Activated CD4-positive, alpha-beta T cell treated with anti-CD3 and anti-CD28 coated beads for 36 hours (primary cell): ENCODE measurements at regions of chr19 and their contacts with region 1.

Region 1: DNA sequence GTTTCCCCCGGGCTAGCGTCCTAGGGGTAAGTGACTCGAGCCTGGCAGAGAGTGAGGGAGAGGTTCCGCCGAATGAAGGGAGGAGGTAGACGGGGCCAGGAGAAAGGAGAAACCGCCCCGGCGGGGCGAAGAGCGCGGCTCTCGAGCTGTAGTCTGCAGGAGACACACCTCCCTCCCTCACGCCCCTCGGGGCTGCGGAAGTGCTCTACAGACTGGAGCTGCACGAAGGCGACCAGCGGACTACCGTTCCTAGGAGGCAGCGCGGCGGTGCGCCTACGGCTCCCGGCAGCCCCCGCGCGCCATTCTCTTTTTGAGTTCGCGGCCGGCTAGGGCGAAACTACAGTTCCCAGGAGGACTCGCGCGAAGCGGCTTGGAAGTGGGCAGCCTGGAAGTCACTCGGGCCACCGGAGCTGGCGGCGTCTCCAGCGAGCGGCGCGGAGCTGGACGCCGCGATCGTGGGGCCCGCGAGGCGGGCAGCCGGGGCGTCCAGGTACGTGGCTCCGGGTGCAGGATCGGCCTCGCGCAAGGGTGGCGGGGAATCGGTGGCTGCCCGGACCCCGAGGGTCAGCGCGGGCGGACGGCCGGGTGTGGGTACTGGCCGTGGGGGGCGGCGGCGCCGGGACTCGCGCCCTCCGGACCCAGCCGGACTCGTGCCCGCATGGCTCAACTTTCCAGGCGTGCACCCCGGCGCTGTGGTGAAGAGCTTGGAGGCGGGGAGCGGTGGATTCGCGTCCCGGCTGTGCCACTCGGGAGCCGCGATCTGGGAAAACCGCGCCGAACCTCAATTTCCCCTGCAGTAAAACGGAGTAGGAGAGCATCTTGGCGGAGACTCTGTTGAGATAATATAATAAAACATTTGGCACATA is at the start of gene SIPA1L3:
- DNase-seq: peak; percentile 97
- ATAC-seq: peak; percentile 98
- H3K4me3 Mint-ChIP-seq: peak within 1 kb of the TSS; percentile 73
- H3K27ac Mint-ChIP-seq: peak within 1 kb of the TSS; percentile 74
- H3K4me1 Mint-ChIP-seq: peaks cover 20% of the 10 kb centered on the region
- H3K27me3 Mint-ChIP-seq: no peaks in the 10 kb centered on the region
- total RNA-seq, gene SIPA1L3: 10.5 to 18.3 TPM

Region 2: GRCh38 chr19:37763488-37763887 is 143.6 kb before region 1 on chr19:
- CTCF ChIA-PET with region 1: no interaction called
- POLR2A ChIA-PET with region 1: no interaction called
- intact Hi-C with region 1: no loop called
- DNase-seq: peak; percentile 38
- ATAC-seq: peak; percentile 91
- H3K4me3 Mint-ChIP-seq: no peak overlapping the region
- H3K27ac Mint-ChIP-seq: no peak overlapping the region
- H3K4me1 Mint-ChIP-seq: peaks cover 4% of the 10 kb centered on the region
- H3K27me3 Mint-ChIP-seq: no peaks in the 10 kb centered on the region

Region 3: GRCh38 chr19:37896180-37896579 is 10.9 kb before region 1 on chr19:
- CTCF ChIA-PET with region 1: interaction called, 15 read pairs
- POLR2A ChIA-PET with region 1: no interaction called
- intact Hi-C with region 1: no loop called
- DNase-seq: no peak
- ATAC-seq: no peak
- H3K4me3 Mint-ChIP-seq: no peak overlapping the region
- H3K27ac Mint-ChIP-seq: no peak overlapping the region
- H3K4me1 Mint-ChIP-seq: peaks cover 3% of the 10 kb centered on the region
- H3K27me3 Mint-ChIP-seq: peaks cover 8% of the 10 kb centered on the region

Region 4: GRCh38 chr19:37951816-37952210 is 44.7 kb after region 1 on chr19:
- CTCF ChIA-PET with region 1: no interaction called
- POLR2A ChIA-PET with region 1: no interaction called
- intact Hi-C with region 1: no loop called
- DNase-seq: no peak
- ATAC-seq: no peak
- H3K4me3 Mint-ChIP-seq: no peak overlapping the region
- H3K27ac Mint-ChIP-seq: no peak overlapping the region
- H3K4me1 Mint-ChIP-seq: no peaks in the 10 kb centered on the region
- H3K27me3 Mint-ChIP-seq: no peaks in the 10 kb centered on the region

Region 5: DNA sequence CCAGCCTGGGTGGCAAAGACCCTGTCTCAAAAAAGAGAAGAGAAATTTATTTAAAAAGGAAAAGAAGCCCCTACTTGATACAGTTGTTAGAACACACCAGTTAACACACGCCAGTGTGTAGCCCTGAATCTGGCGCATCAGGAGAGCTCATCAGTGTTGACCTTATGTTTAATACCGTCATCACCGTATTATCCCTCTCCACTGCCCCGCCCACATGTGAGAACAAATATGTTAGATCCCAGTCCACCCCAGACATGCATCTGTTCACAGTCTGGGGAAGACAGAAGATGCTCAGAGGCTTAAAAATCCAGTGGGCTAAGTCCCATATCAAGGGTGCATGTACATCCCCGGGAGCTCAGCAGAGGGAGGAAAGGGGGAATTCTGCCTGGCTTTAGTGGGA is 161.7 kb after region 1 on chr19:
- CTCF ChIA-PET with region 1: no interaction called
- POLR2A ChIA-PET with region 1: no interaction called
- intact Hi-C with region 1: no loop called
- DNase-seq: no peak
- ATAC-seq: no peak
- H3K4me3 Mint-ChIP-seq: no peak overlapping the region
- H3K27ac Mint-ChIP-seq: no peak overlapping the region
- H3K4me1 Mint-ChIP-seq: peaks cover 2% of the 10 kb centered on the region
- H3K27me3 Mint-ChIP-seq: no peaks in the 10 kb centered on the region

Region 6: DNA sequence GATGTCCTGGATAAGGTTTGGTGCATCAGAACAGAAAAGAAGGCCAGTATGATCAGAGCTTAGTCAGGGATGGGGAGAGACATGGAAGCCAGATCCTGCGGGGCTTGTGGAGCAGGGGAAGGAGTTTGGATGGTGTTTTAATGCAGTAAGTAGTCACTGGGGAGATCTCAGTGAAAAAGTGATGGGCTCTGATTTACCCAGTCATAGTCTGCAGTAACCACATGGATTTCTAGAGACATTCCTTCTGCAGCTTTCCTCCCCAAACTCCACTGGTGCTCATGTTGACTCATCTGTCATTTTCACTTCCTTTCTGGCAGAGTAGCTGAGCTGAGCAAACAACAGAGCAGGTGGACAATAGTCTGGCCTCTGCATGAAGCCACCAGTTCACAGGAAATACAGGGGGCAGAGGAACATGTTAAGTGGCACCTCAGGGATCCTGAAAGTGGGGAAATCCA is 172.9 kb after region 1 on chr19:
- CTCF ChIA-PET with region 1: interaction called, 3 read pairs
- POLR2A ChIA-PET with region 1: no interaction called
- intact Hi-C with region 1: loop called (anchors 1 kb)
- DNase-seq: peak; percentile 14
- ATAC-seq: peak; percentile 50
- H3K4me3 Mint-ChIP-seq: no peak overlapping the region
- H3K27ac Mint-ChIP-seq: peak overlapping the region; percentile 65
- H3K4me1 Mint-ChIP-seq: peaks cover 21% of the 10 kb centered on the region
- H3K27me3 Mint-ChIP-seq: no peaks in the 10 kb centered on the region

Region 7: DNA sequence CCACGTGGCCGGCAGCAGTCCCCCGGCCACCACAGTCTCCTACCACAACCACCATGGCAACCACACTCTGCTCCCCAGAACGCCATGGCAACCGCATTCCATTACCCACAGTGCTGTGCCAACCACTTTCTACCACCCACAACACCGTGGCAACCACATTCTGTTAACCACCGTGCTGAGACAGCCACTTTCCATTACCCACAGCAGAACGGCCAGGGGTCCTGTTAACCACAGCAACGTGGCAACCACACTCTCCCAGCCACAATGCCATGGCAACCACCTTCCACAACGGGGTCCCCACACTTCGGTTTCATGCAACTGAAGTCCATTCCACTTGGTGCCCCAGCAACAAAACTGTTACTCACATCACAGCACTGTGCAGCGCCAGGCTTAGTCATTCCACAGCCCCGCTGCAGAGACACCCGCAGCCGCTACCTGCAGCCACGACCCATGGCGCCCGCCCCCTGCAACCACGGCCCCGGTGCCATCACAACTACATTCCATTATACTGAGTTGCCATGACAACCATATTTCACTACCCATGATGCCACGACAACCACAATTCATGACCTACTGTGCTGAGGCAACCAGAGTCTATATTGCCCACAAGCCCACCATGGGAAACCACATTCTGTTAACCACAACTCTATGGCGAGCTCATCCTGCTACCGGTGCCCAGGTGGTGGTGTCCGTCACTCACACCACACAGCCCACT is 307.0 kb after region 1 on chr19:
- CTCF ChIA-PET with region 1: interaction called, 3 read pairs
- POLR2A ChIA-PET with region 1: no interaction called
- intact Hi-C with region 1: loop called in 1 of 2 experiments (anchors 2 kb)
- DNase-seq: peak; percentile 90
- ATAC-seq: peak; percentile 95
- H3K4me3 Mint-ChIP-seq: peak overlapping the region; percentile 67
- H3K27ac Mint-ChIP-seq: peak overlapping the region; percentile 78
- H3K4me1 Mint-ChIP-seq: peaks cover 24% of the 10 kb centered on the region
- H3K27me3 Mint-ChIP-seq: peaks cover 51% of the 10 kb centered on the region

Region 8: DNA sequence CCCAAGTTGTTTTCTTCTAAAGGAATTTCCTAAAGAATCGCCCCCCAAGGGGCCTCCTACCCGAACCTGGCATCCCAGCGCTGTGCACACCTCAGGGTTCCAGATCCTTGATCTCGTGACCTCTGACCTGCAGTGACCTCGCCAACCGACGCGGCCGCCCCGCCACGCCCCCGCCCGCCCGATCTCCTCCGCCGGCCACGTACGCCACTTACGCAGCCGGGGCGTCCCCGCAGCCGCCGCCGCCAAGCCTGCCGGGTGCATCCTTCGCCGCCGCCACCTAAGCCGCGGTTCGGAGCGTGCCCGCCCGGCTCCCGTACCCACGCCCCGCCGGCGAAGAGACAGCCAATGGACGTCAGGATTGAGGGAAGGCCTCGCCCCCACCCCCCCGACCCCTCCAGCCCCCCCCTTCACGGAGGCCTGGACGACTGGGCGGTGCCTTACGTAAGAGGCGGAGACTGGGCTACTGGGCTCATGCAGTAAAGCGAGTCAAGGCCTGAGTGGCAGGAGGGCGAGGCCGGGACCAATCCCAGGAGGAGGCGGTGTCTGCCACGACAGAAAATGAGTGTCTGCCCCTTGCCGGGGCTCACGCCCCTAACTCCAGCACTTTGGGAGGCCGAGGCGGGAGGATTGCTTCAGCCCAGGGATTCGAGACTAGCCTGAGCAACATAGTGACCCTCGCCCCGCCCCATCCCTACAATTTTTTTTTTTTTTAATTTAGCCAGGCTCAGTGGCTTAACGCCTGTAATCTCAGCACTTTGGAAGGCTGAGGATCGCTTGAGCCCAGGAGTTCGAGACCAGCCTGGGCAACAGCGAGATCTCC is 408.8 kb after region 1 on chr19 and contains the start of gene YIF1B:
- CTCF ChIA-PET with region 1: interaction called, 4 read pairs
- POLR2A ChIA-PET with region 1: no interaction called
- intact Hi-C with region 1: loop called in 1 of 2 experiments (anchors 1 kb)
- DNase-seq: peak; percentile 97
- ATAC-seq: peak; percentile 95
- H3K4me3 Mint-ChIP-seq: peak within 1 kb of the TSS; percentile 94
- H3K27ac Mint-ChIP-seq: peak within 1 kb of the TSS; percentile 98
- H3K4me1 Mint-ChIP-seq: peaks cover 35% of the 10 kb centered on the region
- H3K27me3 Mint-ChIP-seq: no peaks in the 10 kb centered on the region
- total RNA-seq, gene YIF1B: 76.3 to 90.1 TPM